Activated CD4-positive, alpha-beta T cell treated with anti-CD3 and anti-CD28 coated beads for 36 hours (primary cell): ENCODE measurements at regions of chr16 and their contacts with region 1.

Region 1: GRCh38 chr16:80466024-80466987 is 74.5 kb upstream of the DYNLRB2 start:
- DNase-seq: peak; percentile 82
- ATAC-seq: peak; percentile 78
- H3K4me3 Mint-ChIP-seq: no peak overlapping the region
- H3K27ac Mint-ChIP-seq: no peak overlapping the region
- H3K4me1 Mint-ChIP-seq: no peaks in the 10 kb centered on the region
- H3K27me3 Mint-ChIP-seq: peaks cover 9% of the 10 kb centered on the region

Region 2: DNA sequence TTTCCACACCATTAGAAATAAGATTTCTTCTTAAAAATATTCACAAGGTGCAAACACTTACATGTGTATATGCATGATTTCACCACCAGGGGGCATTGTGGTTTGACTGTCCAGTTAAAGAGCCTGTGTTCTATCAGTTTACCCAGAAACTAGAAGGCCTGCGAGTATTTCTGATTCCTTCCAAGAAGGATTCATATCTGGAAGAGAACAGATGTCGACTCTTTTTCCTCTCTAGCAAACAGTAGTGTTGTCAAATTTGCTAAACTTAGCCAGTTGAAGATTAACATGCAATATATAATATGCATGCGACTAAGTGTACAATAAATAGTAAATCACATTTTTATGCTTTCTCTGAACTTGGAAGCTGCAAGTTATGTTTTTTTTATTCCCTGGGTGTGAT is 1962.7 kb before region 1 on chr16:
- CTCF ChIA-PET with region 1: no interaction called
- POLR2A ChIA-PET with region 1: no interaction called
- intact Hi-C with region 1: loop called in 1 of 2 experiments (anchors 2 kb)
- DNase-seq: peak; percentile 67
- ATAC-seq: peak; percentile 49
- H3K4me3 Mint-ChIP-seq: no peak overlapping the region
- H3K27ac Mint-ChIP-seq: no peak overlapping the region
- H3K4me1 Mint-ChIP-seq: no peaks in the 10 kb centered on the region
- H3K27me3 Mint-ChIP-seq: no peaks in the 10 kb centered on the region

Region 3: GRCh38 chr16:79997257-79997656 is 469.0 kb before region 1 on chr16:
- CTCF ChIA-PET with region 1: interaction called, 3 read pairs
- POLR2A ChIA-PET with region 1: no interaction called
- intact Hi-C with region 1: loop called in 1 of 2 experiments (anchors 5 kb)
- DNase-seq: peak; percentile 24
- ATAC-seq: no peak
- H3K4me3 Mint-ChIP-seq: no peak overlapping the region
- H3K27ac Mint-ChIP-seq: no peak overlapping the region
- H3K4me1 Mint-ChIP-seq: no peaks in the 10 kb centered on the region
- H3K27me3 Mint-ChIP-seq: peaks cover 2% of the 10 kb centered on the region

Region 4: GRCh38 chr16:80440667-80441066 is 25.6 kb before region 1 on chr16:
- CTCF ChIA-PET with region 1: no interaction called
- POLR2A ChIA-PET with region 1: no interaction called
- intact Hi-C with region 1: no loop called
- DNase-seq: no peak
- ATAC-seq: no peak
- H3K4me3 Mint-ChIP-seq: no peak overlapping the region
- H3K27ac Mint-ChIP-seq: no peak overlapping the region
- H3K4me1 Mint-ChIP-seq: peaks cover 5% of the 10 kb centered on the region
- H3K27me3 Mint-ChIP-seq: peaks cover 9% of the 10 kb centered on the region

Region 5: DNA sequence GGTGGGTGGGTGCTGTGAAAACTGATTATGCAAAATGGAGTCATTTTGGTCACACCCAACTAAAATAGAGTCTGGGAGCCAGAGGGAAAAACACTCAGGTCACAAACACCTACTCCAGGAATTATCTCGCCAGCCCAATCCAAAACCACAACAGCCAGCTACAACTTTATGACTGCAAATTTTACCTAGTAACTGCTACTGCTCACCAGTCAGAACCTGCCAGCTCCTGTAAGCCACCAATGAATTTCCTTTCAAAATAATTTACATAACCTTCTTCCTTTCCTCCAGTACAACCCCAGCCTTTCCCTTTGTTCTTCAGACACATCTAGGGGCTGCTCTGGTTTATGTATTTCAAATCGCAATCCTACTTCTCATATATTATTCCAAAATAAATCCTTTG is 21.9 kb after region 1 on chr16:
- CTCF ChIA-PET with region 1: no interaction called
- POLR2A ChIA-PET with region 1: no interaction called
- intact Hi-C with region 1: no loop called
- DNase-seq: no peak
- ATAC-seq: no peak
- H3K4me3 Mint-ChIP-seq: no peak overlapping the region
- H3K27ac Mint-ChIP-seq: no peak overlapping the region
- H3K4me1 Mint-ChIP-seq: peaks cover 2% of the 10 kb centered on the region
- H3K27me3 Mint-ChIP-seq: peaks cover 23% of the 10 kb centered on the region

Region 6: DNA sequence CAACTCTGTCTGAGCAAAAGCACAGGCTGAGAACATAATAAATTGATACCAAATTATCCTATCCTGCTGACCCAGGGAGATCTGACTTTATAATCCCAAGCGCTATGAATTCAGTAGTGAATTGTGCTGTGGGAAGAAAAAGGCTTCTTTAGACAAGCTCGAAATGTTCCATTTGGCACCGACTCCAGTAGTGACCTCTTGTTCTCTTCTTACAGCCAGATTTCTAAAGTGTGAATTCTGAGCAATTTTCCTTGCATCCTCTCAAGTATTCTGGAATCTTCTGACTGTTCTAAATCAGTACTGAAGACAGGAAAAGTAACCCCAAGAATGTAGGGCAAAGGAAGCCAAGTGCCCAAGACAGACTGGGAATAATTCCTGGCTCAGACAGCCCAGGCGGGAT is 279.9 kb after region 1 on chr16:
- CTCF ChIA-PET with region 1: no interaction called
- POLR2A ChIA-PET with region 1: no interaction called
- intact Hi-C with region 1: no loop called
- DNase-seq: no peak
- ATAC-seq: no peak
- H3K4me3 Mint-ChIP-seq: no peak overlapping the region
- H3K27ac Mint-ChIP-seq: no peak overlapping the region
- H3K4me1 Mint-ChIP-seq: peaks cover 31% of the 10 kb centered on the region
- H3K27me3 Mint-ChIP-seq: no peaks in the 10 kb centered on the region